GM10248 (cell line): ENCODE measurements at regions of chr13 and their contacts with region 1.

Region 1: DNA sequence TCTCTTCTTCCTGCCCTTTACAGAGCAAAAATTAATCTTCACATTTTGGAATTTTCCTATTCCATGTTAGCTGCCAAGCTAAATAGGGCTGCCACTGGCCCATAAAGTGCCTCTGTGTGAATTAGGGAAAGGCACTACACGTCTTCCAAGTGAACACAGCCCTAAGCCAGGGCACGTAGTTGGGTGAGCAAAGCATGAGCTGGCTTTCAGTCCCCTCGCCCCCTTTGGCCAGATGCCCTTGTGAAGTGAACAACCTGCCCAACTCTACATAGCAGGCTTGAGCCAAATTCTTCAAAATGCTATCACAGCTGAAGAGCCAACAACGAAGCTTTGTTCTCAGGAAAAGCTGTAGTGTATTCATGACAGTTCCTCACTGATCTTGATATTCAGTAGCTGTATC is 213.1 kb downstream of the OXGR1 start:
- DNase-seq: no peak
- CTCF ChIP-seq: no peak

Region 2: GRCh38 chr13:96766306-96766705 is 14.8 kb before region 1 on chr13:
- CTCF ChIA-PET with region 1: interaction called, 15 read pairs
- POLR2A ChIA-PET with region 1: no interaction called
- DNase-seq: no peak
- CTCF ChIP-seq: no peak

Region 3: DNA sequence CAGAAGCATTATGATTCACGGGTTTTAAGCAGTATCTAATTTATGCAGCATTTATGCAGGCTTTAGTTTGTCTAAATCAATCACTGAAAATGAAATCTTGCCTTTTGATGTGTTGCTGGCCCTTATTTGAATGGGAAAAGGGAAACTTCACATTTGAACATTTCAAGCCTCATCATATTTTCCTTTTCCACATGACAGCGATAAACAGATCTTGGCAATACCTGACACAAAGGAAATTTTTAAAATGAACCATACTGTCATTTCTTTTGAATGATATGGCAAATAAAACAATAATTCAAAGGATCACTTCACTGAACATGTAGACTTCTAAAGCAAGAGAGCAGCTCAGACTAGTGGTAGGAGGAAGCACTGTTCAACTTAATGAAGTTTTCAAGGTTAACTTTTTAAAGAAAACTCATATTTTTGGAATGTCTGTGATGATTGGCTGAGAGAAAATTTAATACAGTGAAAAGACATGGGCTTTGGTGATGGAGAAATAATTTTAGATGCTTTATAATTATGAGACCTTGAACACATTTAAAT is 15.0 kb after region 1 on chr13:
- CTCF ChIA-PET with region 1: no interaction called
- POLR2A ChIA-PET with region 1: no interaction called
- DNase-seq: no peak
- CTCF ChIP-seq: no peak